Psoas muscle (tissue), 8 donors: ENCODE measurements at regions of chr10 and their contacts with region 1.

Region 1: DNA sequence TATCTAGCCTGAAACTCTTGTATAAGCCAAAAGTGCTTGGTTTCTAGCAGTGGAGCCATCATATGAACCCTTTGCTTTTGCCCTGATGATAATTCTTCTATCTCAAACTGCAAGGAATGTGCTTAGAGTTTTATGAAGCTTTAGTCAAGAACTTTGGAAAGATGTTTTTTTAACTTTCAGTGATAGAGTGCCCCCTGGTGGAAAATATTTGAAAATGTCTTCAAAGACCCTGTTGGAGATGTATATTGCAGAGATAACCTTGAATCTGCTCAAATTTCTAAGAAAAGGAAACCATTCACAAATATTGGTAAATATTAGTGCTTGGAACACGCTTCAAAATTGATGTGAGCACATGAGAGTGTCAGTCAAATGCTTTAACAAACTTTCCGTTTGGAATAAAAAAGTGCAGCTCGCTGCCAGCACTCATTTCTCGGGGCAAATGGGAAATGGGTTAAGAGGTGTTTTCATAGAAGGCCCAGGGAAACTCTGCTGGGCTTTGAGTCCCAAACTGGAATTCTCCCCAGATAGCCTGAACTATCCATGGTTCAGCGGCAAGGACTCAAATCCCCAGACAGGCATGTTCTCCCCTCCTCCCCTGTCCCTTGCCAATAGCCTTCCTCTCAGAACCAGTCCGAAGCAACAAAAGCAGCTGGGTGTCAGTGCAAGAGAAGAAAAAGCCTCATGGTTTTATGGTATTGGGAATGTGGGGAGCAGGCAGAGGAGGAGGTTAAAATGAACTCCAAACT is 129.3 kb downstream of the MYOF start:
- DNase-seq: no peak
- ATAC-seq: no peak
- H3K4me3 ChIP-seq: no peak overlapping the region
- H3K27ac ChIP-seq: no peak overlapping the region
- H3K4me1 ChIP-seq: no peaks in the 10 kb centered on the region
- H3K27me3 ChIP-seq: no peaks in the 10 kb centered on the region
- CTCF ChIP-seq: peak; percentile 78

Region 2: GRCh38 chr10:92886334-92886961 is 466.4 kb before region 1 on chr10:
- intact Hi-C with region 1: loop called in 1 of 2 experiments (anchors 5 kb)
- DNase-seq: no peak
- ATAC-seq: peak in 2 of 4 donors; percentile 38 to 45
- H3K4me3 ChIP-seq: no peak overlapping the region
- H3K27ac ChIP-seq: no peak overlapping the region
- H3K4me1 ChIP-seq: peaks cover 25% of the 10 kb centered on the region
- H3K27me3 ChIP-seq: no peaks in the 10 kb centered on the region
- CTCF ChIP-seq: no peak

Region 3: DNA sequence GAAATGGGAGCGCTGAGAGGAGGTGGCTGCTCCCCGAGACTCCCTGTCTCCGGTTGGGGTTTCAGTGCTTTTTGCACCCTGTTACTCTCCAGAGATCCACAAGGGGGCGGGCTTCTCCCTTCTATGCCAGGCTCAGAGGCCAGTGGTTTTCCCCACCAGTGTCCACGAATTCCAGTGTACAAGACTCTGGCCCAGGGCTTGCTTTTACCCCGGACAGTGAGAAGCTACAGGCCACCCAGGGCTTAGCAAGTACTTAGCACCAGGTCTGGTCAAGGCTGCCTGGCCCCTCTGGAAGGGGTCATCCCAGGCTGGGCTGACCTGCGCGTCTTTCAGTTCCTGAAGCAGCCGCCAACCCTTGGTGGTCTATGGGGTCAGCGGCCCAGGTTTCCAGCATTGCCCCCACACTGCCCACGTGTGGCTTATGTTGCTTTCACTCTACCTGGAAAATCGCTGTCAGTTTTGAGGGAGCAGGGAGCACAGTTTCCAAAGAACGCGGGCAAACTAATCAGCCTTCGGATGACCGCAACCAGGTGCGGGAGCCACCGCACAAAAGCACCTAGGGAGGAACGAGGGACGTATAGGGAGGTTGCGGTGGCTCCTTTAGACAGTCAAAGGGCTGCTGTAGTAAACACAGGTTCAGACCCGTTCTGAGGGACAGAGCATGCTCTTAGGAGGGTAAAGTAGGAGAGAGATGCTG is 272.3 kb before region 1 on chr10:
- intact Hi-C with region 1: loop called (anchors 2 to 10 kb)
- DNase-seq: no peak
- ATAC-seq: peak; percentile 48 to 71 (median 56)
- H3K4me3 ChIP-seq: no peak overlapping the region
- H3K27ac ChIP-seq: no peak overlapping the region
- H3K4me1 ChIP-seq: no peaks in the 10 kb centered on the region
- H3K27me3 ChIP-seq: peaks cover 0 to 58% (median 6%) of the 10 kb centered on the region in 3 donors
- CTCF ChIP-seq: peak; percentile 65

Region 4: GRCh38 chr10:93115661-93116383 is 237.0 kb before region 1 on chr10:
- intact Hi-C with region 1: loop called in 1 of 2 experiments (anchors 5 kb)
- DNase-seq: peak; percentile 63 to 75
- ATAC-seq: no peak
- H3K4me3 ChIP-seq: no peak overlapping the region
- H3K27ac ChIP-seq: no peak overlapping the region
- H3K4me1 ChIP-seq: no peaks in the 10 kb centered on the region
- H3K27me3 ChIP-seq: peaks cover 0 to 9% (median 1%) of the 10 kb centered on the region in 3 donors
- CTCF ChIP-seq: peak; percentile 15

Region 5: GRCh38 chr10:94062611-94063010 is 709.8 kb after region 1 on chr10:
- intact Hi-C with region 1: loop called in 1 of 2 experiments (anchors 5 kb)
- DNase-seq: no peak
- ATAC-seq: no peak
- H3K4me3 ChIP-seq: no peak overlapping the region
- H3K27ac ChIP-seq: no peak overlapping the region
- H3K4me1 ChIP-seq: no peaks in the 10 kb centered on the region
- H3K27me3 ChIP-seq: no peaks in the 10 kb centered on the region
- CTCF ChIP-seq: no peak